ENCODE measurements at regions of chr9 and their contacts with region 1.

Region 1: DNA sequence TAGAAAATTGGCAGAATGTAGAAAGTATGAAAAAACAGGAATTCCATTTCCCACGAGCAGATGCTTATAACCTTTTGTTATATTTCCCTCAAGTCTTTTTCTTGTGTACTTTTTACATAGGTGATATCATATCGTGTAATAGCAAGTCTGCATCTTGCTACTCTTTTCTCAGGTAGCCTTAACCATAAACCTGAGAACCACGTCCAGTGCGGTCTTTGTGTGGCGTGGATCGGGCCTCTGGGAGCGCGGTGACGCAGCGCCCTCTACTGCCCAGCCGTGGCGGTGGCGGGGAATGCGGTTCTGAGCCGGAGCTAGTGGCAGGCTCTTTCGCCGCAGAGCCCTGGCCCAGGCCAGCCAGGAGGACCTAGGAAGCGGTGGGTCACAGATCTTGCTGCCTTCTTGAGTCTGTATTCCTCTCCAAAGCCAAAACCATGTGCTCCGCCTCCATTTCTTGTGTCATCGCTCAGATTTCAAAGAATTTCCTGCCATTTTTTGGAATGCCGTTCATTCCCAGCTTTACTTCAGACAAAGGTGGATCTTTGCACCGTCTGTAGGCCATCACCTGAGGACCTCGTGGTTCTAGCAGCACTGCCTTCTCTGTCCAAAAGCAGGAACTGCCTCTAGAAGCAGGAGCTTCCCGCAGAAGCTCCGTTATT is 71.9 kb downstream of the MVB12B start:
- DNase-seq: no peak
- H3K4me3 ChIP-seq: no peak overlapping the region
- CTCF ChIP-seq: peak; percentile 100

Region 2: GRCh38 chr9:126301985-126302603 is 96.4 kb before region 1 on chr9:
- CTCF ChIA-PET with region 1: interaction called, 47 read pairs
- POLR2A ChIA-PET with region 1: no interaction called
- DNase-seq: peak; percentile 4
- H3K4me3 ChIP-seq: no peak overlapping the region
- CTCF ChIP-seq: peak; percentile 87

Region 3: DNA sequence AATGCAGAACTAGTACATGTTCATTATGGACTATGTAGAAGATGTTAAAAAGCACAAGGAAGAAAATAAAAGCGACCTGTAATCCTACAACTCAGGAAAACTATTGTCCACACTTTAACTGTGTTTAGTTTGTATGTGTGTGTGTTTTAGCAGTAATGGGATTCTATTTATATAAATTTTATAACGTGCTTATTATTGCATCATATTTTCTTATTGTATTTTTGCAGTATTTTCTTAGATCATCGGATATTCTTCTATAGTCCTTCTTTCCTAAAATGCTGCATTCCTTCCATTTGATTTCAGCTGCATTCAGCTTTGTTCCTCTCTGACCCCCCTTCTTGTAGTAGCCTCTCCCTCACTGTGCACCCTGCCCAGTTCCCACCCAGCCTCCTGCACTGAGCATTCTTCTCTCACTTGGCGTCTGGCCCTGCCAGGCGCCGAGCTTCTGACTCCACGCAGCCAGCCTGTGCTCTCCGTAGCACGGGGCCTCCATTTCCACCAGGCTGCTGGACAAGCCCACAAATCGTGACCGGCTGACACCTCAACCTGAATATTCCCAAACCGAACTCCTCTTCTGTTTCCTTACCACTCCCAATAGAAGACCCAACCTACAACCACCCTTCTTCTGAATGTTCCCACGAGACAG is 32.0 kb before region 1 on chr9:
- CTCF ChIA-PET with region 1: interaction called, 13 read pairs
- POLR2A ChIA-PET with region 1: no interaction called
- DNase-seq: no peak
- H3K4me3 ChIP-seq: no peak overlapping the region
- CTCF ChIP-seq: no peak

Region 4: DNA sequence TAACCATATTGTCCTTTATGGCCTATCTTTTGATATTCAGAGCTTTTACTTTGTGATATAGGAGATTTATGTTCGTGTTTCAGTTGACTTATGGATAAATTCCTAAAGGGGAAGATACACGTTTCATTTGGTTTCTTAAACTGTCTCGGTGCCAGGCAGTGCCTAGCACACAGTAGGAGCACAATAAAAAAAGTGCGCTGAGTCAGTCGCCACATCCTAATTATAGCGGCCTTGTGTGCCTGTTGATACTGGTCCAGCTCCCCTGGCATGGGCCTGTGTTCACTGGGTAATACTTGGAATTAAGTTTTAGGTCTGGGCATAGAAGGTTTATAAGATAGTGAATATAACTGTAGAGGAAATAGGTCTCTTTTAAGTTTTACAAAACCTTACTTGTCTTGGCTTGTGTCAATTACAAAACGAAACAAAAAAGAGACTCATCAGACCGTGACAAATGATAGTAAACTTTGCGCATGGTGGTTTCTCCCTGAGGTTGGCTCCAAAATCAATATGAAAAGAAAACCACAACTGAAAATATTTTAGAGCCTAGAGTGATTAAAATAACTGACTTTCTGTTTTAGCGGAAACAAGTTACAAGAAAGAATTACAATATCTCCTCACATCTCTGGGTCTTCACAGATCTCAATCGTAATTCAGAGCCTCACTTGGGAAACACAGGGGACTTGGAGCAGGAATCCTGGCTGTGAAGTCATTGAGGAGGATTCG is 12.9 kb after region 1 on chr9:
- CTCF ChIA-PET with region 1: interaction called, 72 read pairs
- POLR2A ChIA-PET with region 1: no interaction called
- DNase-seq: no peak
- H3K4me3 ChIP-seq: no peak overlapping the region; the same call in 1 of the 2 replicates
- CTCF ChIP-seq: no peak

Region 5: GRCh38 chr9:126471084-126471624 is 72.6 kb after region 1 on chr9:
- CTCF ChIA-PET with region 1: interaction called, 11 read pairs
- POLR2A ChIA-PET with region 1: interaction called, 3 read pairs
- DNase-seq: peak; percentile 53
- H3K4me3 ChIP-seq: peak overlapping the region; percentile 19
- CTCF ChIP-seq: no peak

Measured in AG04449 (cell line).